Activated B cell treated with CpG ODN at 0.5 μM for 24 hours (primary cell): ENCODE measurements at regions of chr21 and their contacts with region 1.

Region 1: GRCh38 chr21:32834916-32835235 is 63.3 kb upstream of the PAXBP1 start:
- DNase-seq: no peak
- ATAC-seq: no peak
- H3K4me3 Mint-ChIP-seq: no peak overlapping the region
- H3K27ac Mint-ChIP-seq: no peak overlapping the region
- H3K4me1 Mint-ChIP-seq: no peaks in the 10 kb centered on the region
- H3K27me3 Mint-ChIP-seq: peaks cover 9% of the 10 kb centered on the region
- CTCF ChIP-seq: no peak

Region 2: DNA sequence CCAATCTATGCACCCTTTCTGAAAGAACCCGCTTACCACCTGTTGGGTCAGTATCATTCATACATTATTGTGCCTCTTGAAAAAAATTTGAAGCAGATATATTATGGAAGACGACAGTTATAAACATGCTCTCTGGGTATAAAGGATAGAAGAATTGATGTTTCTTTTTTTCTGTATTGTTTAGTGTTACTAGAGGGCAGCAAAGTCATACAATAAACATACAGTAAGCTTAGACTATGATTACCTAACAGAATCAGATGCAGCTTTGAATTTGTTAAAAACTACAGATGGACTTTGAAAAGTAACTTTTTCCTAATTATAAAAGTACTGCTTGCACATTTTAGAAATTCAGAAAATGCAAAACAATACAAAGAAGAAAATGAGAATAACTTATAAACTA is 52.2 kb before region 1 on chr21:
- CTCF ChIA-PET with region 1: no interaction called
- POLR2A ChIA-PET with region 1: no interaction called
- intact Hi-C with region 1: no loop called
- DNase-seq: no peak
- ATAC-seq: no peak
- H3K4me3 Mint-ChIP-seq: no peak overlapping the region
- H3K27ac Mint-ChIP-seq: no peak overlapping the region
- H3K4me1 Mint-ChIP-seq: peaks cover 7% of the 10 kb centered on the region
- H3K27me3 Mint-ChIP-seq: no peaks in the 10 kb centered on the region
- CTCF ChIP-seq: no peak

Region 3: GRCh38 chr21:33355355-33355754 is 520.5 kb after region 1 on chr21:
- CTCF ChIA-PET with region 1: no interaction called
- POLR2A ChIA-PET with region 1: no interaction called
- intact Hi-C with region 1: loop called (anchors 5 kb)
- DNase-seq: no peak
- ATAC-seq: no peak
- H3K4me3 Mint-ChIP-seq: no peak overlapping the region
- H3K27ac Mint-ChIP-seq: peak overlapping the region; percentile 25
- H3K4me1 Mint-ChIP-seq: peaks cover 17% of the 10 kb centered on the region
- H3K27me3 Mint-ChIP-seq: no peaks in the 10 kb centered on the region
- CTCF ChIP-seq: no peak

Region 4: GRCh38 chr21:33451634-33452071 is 616.8 kb after region 1 on chr21:
- CTCF ChIA-PET with region 1: no interaction called
- POLR2A ChIA-PET with region 1: interaction called, 6 read pairs
- intact Hi-C with region 1: loop called (anchors 5 kb)
- DNase-seq: no peak
- ATAC-seq: no peak
- H3K4me3 Mint-ChIP-seq: no peak overlapping the region
- H3K27ac Mint-ChIP-seq: no peak overlapping the region
- H3K4me1 Mint-ChIP-seq: no peaks in the 10 kb centered on the region
- H3K27me3 Mint-ChIP-seq: no peaks in the 10 kb centered on the region
- CTCF ChIP-seq: no peak